Activated CD4-positive, alpha-beta T cell treated with anti-CD3 and anti-CD28 coated beads, Interleukin-2, amount 10 ng/mL, durations not matched to agents 7 days and 5 days (primary cell): ENCODE measurements at regions of chr12 and their contacts with region 1.

Region 1: GRCh38 chr12:57190037-57190436 is 26.6 kb upstream of the NXPH4 start:
- DNase-seq: no peak
- H3K4me3 Mint-ChIP-seq: no peak overlapping the region
- H3K27ac Mint-ChIP-seq: no peak overlapping the region
- H3K4me1 Mint-ChIP-seq: no peaks in the 10 kb centered on the region
- H3K27me3 Mint-ChIP-seq: no peaks in the 10 kb centered on the region

Region 2: DNA sequence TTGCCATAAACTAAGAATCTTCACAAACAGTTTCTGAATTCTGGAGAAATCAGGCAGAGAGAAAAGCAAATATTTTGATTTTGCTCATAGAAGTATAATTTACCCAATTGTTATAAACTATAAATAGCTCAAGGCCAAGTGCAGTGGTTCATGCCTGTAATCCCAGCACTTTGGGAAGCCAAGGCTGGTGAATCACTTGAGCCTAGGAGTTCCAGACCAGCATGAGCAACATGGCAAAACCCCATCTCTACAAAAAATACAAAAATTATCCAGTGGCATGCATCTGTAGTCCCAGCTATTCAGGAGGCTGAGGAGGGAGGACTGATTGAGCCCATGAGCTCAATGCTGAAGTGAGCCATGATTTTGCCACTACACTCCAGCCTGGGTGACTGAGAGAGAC is 1327.8 kb before region 1 on chr12:
- CTCF ChIA-PET with region 1: no interaction called
- POLR2A ChIA-PET with region 1: interaction called, 13 read pairs
- DNase-seq: no peak
- H3K4me3 Mint-ChIP-seq: no peak overlapping the region
- H3K27ac Mint-ChIP-seq: no peak overlapping the region
- H3K4me1 Mint-ChIP-seq: no peaks in the 10 kb centered on the region
- H3K27me3 Mint-ChIP-seq: peaks cover 2% of the 10 kb centered on the region

Region 3: GRCh38 chr12:56908136-56908535 is 281.9 kb before region 1 on chr12:
- CTCF ChIA-PET with region 1: no interaction called
- POLR2A ChIA-PET with region 1: no interaction called
- DNase-seq: no peak
- H3K4me3 Mint-ChIP-seq: no peak overlapping the region
- H3K27ac Mint-ChIP-seq: no peak overlapping the region
- H3K4me1 Mint-ChIP-seq: no peaks in the 10 kb centered on the region
- H3K27me3 Mint-ChIP-seq: peaks cover 6% of the 10 kb centered on the region

Region 4: GRCh38 chr12:57200497-57200896 is 10.5 kb after region 1 on chr12:
- CTCF ChIA-PET with region 1: no interaction called
- POLR2A ChIA-PET with region 1: no interaction called
- DNase-seq: no peak
- H3K4me3 Mint-ChIP-seq: no peak overlapping the region
- H3K27ac Mint-ChIP-seq: no peak overlapping the region
- H3K4me1 Mint-ChIP-seq: no peaks in the 10 kb centered on the region
- H3K27me3 Mint-ChIP-seq: no peaks in the 10 kb centered on the region

Region 5: DNA sequence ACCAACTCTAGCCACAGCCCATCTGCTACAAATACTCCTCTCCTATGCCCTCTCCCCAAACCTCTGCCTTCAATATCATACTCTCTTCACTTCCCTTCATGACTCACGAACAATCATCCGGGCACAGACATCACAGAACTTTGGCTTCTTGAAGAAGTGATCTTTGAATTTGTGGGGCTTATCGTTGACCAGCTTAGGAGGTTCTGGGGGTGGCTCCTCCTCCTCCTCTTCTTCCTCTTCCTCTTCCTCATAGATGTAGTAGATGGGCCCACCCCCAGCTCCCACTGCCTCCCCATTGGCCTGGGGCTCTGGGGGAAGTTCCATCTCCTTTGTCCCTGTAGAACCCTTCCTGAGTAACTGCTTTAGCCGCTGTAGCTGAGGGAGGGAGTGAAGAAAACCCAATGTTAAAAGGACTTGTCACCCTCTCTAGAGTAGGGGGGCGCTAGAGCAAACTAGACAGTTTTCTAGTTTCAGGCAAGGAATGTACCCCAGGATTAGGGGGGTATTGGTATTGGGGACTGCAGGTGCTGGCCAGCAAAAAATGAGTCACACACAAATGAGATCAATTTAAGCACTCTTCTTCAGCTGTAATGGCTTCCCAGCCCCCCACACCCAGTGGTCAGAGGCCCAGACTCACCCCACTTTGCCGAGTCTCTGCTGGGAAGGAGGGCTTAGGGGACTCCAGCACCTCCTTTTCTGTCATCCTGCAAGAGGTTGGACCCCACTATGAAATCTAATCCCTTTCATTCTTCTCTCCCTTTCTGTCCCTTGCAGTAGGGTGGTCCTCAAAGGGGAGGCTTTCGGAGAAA is 59.1 kb after region 1 on chr12:
- CTCF ChIA-PET with region 1: no interaction called
- POLR2A ChIA-PET with region 1: no interaction called
- DNase-seq: no peak
- H3K4me3 Mint-ChIP-seq: peak overlapping the region; percentile 18
- H3K27ac Mint-ChIP-seq: peak overlapping the region; percentile 5
- H3K4me1 Mint-ChIP-seq: peaks cover 9% of the 10 kb centered on the region
- H3K27me3 Mint-ChIP-seq: no peaks in the 10 kb centered on the region